Activated B cell treated with CpG ODN at 0.5 μM for 24 hours (primary cell): ENCODE measurements at regions of chr9 and their contacts with region 1.

Region 1: DNA sequence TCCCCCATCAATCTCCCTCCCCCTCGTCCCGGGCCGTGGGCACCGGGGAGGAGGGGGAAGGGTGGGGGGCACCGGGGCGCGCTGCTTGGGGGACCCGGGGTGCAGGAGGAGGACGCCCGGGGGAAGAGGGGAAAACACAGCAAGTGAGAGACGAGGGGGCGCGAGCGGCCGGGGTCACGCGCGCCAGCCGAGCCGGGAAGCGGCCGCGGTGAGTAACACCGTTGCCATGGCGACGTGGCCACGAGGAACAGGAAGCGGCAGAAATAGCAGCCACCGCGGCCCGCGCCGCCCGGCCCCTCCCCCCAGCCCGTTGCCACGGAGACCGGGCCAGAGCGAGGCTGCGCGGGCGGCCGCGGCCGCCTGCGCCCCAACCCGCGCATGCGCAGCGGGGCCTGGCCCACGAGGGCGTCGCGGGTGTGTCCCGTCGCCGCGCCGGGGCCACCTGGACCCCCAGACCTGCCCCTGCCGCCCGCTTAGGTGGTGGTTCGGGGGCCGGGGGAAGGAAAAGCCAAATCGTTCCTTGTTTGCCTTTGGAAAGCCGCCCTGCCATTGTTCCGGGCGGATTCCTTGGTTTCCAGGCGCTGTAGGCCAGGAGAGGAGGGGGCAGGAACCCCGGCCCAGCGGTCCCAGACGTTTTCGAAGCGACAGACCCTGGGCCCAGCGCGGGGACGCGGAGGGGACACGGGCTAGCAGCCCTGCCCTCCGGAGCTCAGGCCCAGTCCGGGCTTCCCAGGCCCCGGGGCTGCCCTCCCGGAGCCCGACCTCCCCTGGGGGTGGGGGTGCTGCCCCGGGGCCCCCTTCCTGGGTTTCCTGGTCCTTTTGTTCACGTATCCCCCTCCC is 207.1 kb downstream of the C9orf50 start:
- DNase-seq: peak; percentile 99
- ATAC-seq: peak; percentile 79
- H3K4me3 Mint-ChIP-seq: peak overlapping the region; percentile 85
- H3K27ac Mint-ChIP-seq: peak overlapping the region; percentile 97
- H3K4me1 Mint-ChIP-seq: peaks cover 14% of the 10 kb centered on the region
- H3K27me3 Mint-ChIP-seq: no peaks in the 10 kb centered on the region
- CTCF ChIP-seq: no peak

Region 2: GRCh38 chr9:129202613-129203555 is 210.9 kb before region 1 on chr9:
- CTCF ChIA-PET with region 1: no interaction called
- POLR2A ChIA-PET with region 1: no interaction called
- intact Hi-C with region 1: loop called (anchors 5 kb)
- DNase-seq: peak; percentile 93
- ATAC-seq: peak; percentile 98
- H3K4me3 Mint-ChIP-seq: peak overlapping the region; percentile 81
- H3K27ac Mint-ChIP-seq: peak overlapping the region; percentile 73
- H3K4me1 Mint-ChIP-seq: no peaks in the 10 kb centered on the region
- H3K27me3 Mint-ChIP-seq: peaks cover 6% of the 10 kb centered on the region
- CTCF ChIP-seq: no peak

Region 3: DNA sequence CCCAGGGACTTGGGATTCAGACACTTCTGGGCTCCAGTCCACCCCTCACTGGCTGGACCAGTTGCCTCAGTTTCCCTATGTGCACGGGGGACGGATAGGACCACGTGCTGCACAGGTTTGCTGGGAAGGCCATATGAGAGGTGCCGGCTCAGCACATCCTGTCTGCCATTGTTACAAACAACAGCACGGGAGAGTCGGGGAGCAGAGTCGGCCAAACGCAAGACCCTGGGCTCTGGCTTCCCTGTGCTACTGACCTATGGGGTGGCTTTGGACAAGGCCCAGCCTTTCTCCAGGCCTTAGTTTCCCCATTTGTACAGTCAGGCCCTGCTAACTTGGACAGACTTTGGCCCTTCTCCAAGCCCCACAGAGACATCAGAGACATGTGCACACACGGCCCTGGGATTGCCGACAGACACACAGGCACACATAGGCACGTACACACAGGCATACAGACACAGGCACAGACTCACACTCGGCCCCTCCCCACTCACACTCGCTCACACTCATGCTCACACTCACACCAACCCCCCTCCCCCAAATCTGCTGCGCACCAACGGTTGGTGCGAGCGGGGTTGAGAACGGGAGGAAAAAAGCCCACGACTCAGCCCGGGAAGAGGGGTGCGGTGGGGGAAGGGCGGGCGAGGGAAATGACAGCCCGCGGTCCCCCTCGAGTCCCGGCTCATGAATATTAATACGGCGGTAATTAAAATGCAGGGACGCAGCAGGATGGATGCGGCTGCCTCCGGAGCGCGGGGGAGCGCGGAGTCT is 74.1 kb after region 1 on chr9:
- CTCF ChIA-PET with region 1: no interaction called
- POLR2A ChIA-PET with region 1: interaction called, 3 read pairs
- intact Hi-C with region 1: loop called (anchors 1 kb)
- DNase-seq: no peak
- ATAC-seq: peak; percentile 12
- H3K4me3 Mint-ChIP-seq: peak overlapping the region; percentile 81
- H3K27ac Mint-ChIP-seq: peak overlapping the region; percentile 88
- H3K4me1 Mint-ChIP-seq: peaks cover 39% of the 10 kb centered on the region
- H3K27me3 Mint-ChIP-seq: peaks cover 11% of the 10 kb centered on the region
- CTCF ChIP-seq: no peak